ENCODE measurements at regions of chr5 and their contacts with region 1.

Region 1: DNA sequence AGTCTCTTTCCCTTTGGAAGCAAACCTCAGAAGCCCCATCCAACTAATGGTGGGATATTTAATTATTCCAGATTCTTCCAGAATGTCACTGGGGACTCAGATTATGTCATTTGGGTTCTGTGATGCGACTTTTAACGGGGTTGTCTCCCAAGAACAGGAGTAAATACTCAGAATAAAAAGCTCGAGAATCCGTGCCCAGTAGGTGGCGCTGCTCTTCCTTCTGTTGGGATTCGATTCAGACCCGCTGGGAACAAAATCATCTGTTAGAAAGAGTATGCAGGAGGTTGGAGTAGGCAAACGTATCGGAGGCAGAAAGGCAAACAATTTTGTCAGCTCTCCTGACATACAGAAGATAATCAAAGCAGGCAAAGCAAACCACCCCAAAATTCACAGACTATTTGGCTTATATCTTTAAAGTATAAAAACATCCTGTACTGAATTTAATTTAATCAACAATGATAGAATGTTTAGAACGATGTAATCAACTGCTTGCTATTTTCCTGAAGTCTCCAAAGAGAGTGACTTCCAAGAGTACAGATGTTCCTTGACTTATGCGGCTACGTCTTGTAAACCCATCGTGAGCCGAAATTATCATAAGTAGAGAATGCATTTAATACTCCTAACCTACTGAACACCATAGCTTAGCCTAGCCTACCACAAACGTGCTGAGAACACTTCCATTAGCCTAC is 169.8 kb upstream of the RAI14 start:
- DNase-seq: peak; percentile 89
- H3K4me3 ChIP-seq: no peak overlapping the region
- H3K27ac ChIP-seq: peak overlapping the region; percentile 80
- H3K27me3 ChIP-seq: no peaks in the 10 kb centered on the region
- CTCF ChIP-seq: peak; percentile 86

Region 2: DNA sequence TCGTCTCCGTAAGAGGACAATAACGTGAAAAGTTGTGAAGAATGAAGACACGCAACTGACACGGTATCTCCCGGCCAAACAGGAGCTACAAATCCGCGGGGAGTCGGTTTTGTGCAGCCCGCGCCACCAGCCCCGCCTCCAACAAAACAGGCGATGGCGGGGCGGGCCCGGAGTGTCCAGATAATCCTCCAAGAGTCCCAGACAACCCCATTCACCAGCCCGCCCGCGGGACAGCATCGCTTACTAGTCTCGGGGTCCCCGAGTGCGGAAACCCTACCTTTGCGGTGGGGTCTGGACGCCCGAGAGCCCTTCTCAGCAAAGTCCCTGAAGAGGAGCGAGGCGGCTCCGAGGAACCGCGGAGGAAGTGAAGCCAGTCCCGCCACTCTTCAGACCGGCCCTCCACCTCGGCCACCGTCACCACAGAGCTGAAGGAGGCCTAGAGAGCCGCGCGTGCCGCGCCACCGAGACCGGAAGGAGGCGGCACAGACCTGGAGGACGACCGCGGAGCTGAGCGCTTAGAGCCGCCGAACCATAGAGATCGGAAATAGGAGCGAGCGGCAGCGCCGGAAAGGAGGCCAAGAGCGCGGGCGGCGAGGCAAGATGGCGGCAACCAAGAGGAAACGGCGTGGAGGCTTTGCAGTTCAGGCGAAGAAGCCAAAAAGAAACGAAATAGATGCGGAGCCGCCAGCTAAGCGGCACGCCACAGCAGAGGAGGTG is 429.0 kb after region 1 on chr5 and contains the starts of genes BRIX1 and RAD1:
- in situ Hi-C with region 1: loop called (anchors 25 kb)
- DNase-seq: peak; percentile 96
- H3K4me3 ChIP-seq: peak within 1 kb of the TSS; percentile 95
- H3K27ac ChIP-seq: peak within 1 kb of the TSS; percentile 79
- H3K27me3 ChIP-seq: no peaks in the 10 kb centered on the region
- CTCF ChIP-seq: peak; percentile 21

Measured in brain microvascular endothelial cell (primary cell).